ENCODE measurements at regions of chr1 and their contacts with region 1.

Region 1: GRCh38 chr1:64956733-64957441 is 9.5 kb downstream of the JAK1 start:
- DNase-seq: peak; percentile 38
- H3K4me3 Mint-ChIP-seq: no peak overlapping the region
- H3K27ac Mint-ChIP-seq: no peak overlapping the region
- H3K4me1 Mint-ChIP-seq: peaks cover 59% of the 10 kb centered on the region
- H3K27me3 Mint-ChIP-seq: no peaks in the 10 kb centered on the region

Region 2: DNA sequence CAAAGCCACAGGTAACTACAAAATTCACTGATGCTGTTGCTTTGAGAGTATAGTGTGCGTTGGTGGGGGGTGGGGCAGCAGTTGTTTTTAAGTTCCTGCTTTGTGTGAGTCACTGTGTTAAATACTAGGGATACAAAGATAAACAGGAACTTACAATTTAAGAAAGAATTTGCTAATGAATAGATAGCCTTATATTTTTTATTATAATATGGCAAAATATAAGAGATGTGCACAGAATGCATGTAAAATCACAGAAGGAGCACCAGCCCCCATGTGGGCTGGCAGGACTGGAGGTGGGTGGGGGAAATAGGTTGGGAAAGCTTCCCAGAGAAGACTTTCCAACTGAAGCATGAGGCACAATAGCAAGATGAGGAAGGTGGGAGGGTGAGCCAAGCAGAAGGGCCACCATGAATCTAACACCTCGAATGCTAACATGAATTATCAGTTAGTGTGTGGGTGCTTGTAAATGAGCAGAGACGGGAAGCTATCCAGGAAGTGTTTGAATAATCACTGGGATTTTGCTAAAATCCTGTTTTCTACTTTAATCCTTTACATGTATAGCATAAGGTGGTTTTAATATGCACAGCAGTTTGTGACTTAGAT is 269.1 kb before region 1 on chr1:
- CTCF ChIA-PET with region 1: no interaction called
- POLR2A ChIA-PET with region 1: no interaction called
- DNase-seq: no peak
- H3K4me3 Mint-ChIP-seq: no peak overlapping the region
- H3K27ac Mint-ChIP-seq: no peak overlapping the region
- H3K4me1 Mint-ChIP-seq: peaks cover 10% of the 10 kb centered on the region
- H3K27me3 Mint-ChIP-seq: no peaks in the 10 kb centered on the region

Region 3: DNA sequence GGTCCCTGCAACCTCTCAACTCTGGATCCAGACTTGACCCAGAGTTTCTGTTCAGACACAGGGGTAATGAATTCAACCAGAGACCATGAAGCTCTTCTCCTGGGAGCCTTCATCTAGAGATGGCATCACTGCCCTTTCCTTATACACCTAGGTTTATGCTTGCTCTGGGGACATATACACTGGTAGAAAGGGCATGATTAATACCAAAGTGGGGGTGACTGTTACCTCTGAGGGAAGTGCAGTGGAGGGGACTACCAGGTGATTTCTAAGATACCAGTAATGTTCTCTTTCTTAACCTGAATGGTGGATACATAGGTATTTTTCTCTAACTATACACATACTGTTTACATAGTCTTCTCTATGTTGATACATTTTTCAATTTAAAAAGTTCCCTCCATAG is 39.0 kb before region 1 on chr1:
- CTCF ChIA-PET with region 1: interaction called, 10 read pairs
- POLR2A ChIA-PET with region 1: no interaction called
- DNase-seq: no peak
- H3K4me3 Mint-ChIP-seq: no peak overlapping the region
- H3K27ac Mint-ChIP-seq: no peak overlapping the region
- H3K4me1 Mint-ChIP-seq: peaks cover 58% of the 10 kb centered on the region
- H3K27me3 Mint-ChIP-seq: no peaks in the 10 kb centered on the region

Region 4: DNA sequence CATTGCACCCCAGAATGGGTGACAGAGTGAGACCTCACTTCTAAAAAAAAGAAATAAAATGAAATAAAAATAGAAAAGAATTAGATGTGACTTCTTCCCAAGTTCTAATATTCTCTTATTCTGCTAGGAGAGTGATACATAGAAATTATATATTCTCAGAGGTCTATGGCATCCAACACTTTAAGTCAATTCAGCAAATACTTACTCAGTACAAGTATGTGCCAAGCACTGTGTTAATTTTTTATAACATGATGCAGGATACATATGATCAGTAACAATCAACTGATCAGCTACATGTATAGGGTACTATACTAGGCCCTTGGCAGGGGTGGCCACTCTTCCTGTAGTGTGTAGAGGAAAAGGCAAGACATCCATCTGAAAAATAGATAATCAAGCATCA is 22.5 kb after region 1 on chr1:
- CTCF ChIA-PET with region 1: no interaction called
- POLR2A ChIA-PET with region 1: no interaction called
- DNase-seq: no peak
- H3K4me3 Mint-ChIP-seq: no peak overlapping the region
- H3K27ac Mint-ChIP-seq: no peak overlapping the region
- H3K4me1 Mint-ChIP-seq: peaks cover 10% of the 10 kb centered on the region
- H3K27me3 Mint-ChIP-seq: no peaks in the 10 kb centered on the region

Region 5: GRCh38 chr1:65006806-65007205 is 49.9 kb after region 1 on chr1:
- CTCF ChIA-PET with region 1: no interaction called
- POLR2A ChIA-PET with region 1: no interaction called
- DNase-seq: no peak
- H3K4me3 Mint-ChIP-seq: no peak overlapping the region
- H3K27ac Mint-ChIP-seq: no peak overlapping the region
- H3K4me1 Mint-ChIP-seq: peaks cover 47% of the 10 kb centered on the region
- H3K27me3 Mint-ChIP-seq: peaks cover 22% of the 10 kb centered on the region